PC-9 (cell line): ENCODE measurements at regions of chr3 and their contacts with region 1.

Region 1: DNA sequence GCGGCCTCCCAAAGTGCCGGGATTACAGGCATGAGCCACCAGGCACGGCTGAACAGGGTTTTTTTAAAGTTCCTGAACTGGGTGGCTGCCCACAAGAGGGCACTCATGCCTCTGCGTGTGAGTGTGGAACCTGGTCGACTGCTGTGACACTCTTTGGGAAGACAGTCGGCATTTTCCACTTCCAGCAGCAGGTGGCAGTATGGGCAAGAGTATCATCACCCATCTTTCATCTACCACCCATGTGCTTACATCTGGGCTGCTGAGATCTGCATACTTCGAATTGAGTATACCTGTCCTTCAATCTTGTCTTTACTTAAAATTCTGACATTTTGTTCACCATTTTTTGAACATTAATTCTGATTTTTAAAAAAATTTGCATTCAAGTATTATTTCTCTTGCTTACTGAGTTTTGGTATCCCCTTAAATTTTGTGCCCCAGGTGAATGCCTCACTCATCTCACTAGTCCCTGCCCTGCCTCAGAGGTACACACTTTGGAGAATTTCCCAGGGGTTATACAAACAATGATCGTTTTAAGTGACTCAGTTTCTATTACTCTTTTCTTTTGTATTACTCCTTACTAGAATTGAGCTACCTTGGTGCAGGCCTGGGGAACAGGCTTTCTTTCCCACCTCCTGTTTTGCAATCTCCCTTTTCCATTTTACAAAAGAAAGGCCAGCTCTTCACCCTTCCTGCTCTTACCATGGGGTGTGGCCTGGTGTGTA is 11.8 kb downstream of the CLEC3B start:
- DNase-seq: peak; percentile 83 to 91
- H3K4me3 ChIP-seq: no peak overlapping the region
- H3K27ac ChIP-seq: no peak overlapping the region
- H3K4me1 ChIP-seq: peaks cover 30% of the 10 kb centered on the region
- H3K27me3 ChIP-seq: no peaks in the 10 kb centered on the region
- CTCF ChIP-seq: peak; percentile 88

Region 2: DNA sequence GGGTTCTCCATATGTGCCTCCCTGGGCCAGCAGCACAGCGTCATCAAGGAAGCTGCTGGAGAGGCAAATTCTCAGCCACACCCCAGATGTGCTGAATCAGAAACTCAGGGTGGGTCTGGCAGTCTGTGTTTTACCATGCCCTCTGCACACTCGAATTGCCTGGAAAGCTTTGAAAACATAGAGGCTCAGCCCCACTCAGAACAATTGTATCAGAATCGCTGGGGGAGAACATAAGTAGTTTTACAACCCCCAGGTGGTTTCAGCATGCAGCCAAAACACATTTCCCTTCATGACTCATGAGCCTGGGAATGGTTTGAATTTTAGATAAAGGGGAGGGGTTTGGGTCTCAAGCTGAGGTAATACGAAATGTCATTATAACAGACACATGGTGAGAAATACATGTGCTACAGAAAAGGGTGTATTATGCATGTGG is 153.9 kb before region 1 on chr3:
- CTCF ChIA-PET with region 1: no interaction called
- POLR2A ChIA-PET with region 1: no interaction called
- intact Hi-C with region 1: no loop called
- DNase-seq: peak; percentile 68 to 91
- H3K4me3 ChIP-seq: no peak overlapping the region
- H3K27ac ChIP-seq: peak overlapping the region; percentile 77
- H3K4me1 ChIP-seq: peaks cover 43% of the 10 kb centered on the region
- H3K27me3 ChIP-seq: no peaks in the 10 kb centered on the region
- CTCF ChIP-seq: no peak

Region 3: GRCh38 chr3:44954962-44955361 is 82.9 kb before region 1 on chr3:
- CTCF ChIA-PET with region 1: no interaction called
- POLR2A ChIA-PET with region 1: no interaction called
- intact Hi-C with region 1: no loop called
- DNase-seq: peak; percentile 61 to 89
- H3K4me3 ChIP-seq: no peak overlapping the region
- H3K27ac ChIP-seq: peak overlapping the region; percentile 46
- H3K4me1 ChIP-seq: peaks cover 41% of the 10 kb centered on the region
- H3K27me3 ChIP-seq: no peaks in the 10 kb centered on the region
- CTCF ChIP-seq: no peak

Region 4: DNA sequence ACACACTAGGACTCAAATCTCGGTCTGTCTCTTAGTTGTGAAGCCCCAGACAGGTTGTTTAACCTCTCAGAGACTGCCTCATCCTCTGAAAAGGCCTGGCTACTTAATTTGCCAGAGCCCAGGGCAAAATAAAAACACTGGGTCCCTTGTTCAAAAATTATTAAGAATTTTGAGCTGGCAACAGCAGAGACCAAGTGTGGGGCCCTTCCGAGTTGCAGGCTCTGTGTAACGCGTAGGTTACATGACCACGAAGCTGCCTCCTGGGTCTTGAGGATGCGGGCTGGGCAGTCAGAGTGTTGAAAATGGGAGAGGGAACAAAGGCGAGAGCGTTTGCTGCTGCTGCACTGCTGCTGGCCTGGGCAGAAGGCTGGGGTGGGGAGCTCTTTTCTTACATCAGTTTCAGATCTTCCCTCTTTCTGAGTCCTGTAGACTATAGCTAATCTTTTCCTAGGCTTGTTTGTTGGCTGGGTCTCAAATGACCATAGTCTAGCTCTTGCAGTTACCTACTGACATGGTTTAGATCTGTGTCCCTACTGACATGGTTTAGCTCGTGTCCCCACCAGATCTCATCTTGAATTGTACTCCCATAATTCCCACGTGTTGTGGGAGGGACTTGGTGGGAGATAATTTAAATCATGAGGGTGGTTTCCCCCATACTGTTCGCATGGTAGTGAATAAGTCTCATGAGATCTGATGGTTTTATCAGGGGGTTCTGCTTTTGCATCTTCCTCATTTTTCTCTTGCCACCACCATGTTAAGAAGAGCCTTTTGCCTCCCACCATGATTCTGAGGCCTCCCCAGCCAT is 38.1 kb after region 1 on chr3:
- CTCF ChIA-PET with region 1: interaction called, 10 read pairs
- POLR2A ChIA-PET with region 1: no interaction called
- intact Hi-C with region 1: no loop called
- DNase-seq: no peak
- H3K4me3 ChIP-seq: no peak overlapping the region
- H3K27ac ChIP-seq: no peak overlapping the region
- H3K4me1 ChIP-seq: no peaks in the 10 kb centered on the region
- H3K27me3 ChIP-seq: no peaks in the 10 kb centered on the region
- CTCF ChIP-seq: no peak

Region 5: DNA sequence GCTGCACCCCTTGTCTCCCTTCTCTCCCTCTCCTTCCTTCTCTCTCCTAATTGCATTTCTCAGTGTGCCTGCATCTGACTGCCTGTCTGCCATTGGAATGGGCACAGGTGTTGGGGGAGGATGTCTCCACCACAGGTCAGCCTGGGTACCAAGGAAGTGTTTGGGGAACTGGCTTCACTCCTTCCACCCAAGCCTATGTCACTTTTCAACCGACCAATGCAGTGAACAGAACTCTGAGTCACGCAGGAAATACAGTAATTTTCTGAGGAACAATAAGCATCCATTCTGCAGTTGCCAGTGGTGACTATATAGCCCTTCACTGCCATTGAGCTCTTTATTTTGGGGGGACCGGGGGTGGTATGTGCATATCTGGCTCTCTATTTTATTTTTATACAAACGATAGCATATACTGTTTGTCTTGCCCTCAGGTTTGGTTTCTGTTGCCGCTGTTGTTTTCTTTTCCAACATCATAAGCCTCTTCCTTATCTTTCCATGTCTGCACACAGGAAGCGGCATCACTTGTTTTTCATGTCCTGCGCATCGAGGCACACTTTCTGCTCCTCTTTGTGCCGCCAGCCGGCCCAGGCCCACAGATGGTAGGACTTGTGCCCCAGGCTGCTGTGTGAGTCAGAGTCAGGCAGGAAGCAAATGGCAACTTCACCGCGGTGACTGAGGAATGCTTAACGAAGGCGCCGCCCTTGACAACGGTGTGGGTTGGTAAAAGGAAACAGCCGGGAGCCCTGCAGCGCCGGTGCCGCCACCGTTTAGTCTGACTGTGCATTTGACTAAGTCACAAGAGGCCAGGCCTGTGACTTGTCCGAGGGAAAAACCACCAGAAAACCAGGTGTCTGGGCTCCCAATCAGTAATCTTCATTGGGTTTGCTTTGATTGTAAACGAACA is 129.4 kb after region 1 on chr3:
- CTCF ChIA-PET with region 1: no interaction called
- POLR2A ChIA-PET with region 1: no interaction called
- intact Hi-C with region 1: loop called (anchors 1 kb)
- DNase-seq: peak; percentile 96 to 97
- H3K4me3 ChIP-seq: peak overlapping the region; percentile 26; the same call in 1 of the 2 replicates
- H3K27ac ChIP-seq: peak overlapping the region; percentile 92
- H3K4me1 ChIP-seq: peaks cover 35% of the 10 kb centered on the region
- H3K27me3 ChIP-seq: no peaks in the 10 kb centered on the region
- CTCF ChIP-seq: no peak

Region 6: GRCh38 chr3:45387636-45388348 is 349.9 kb after region 1 on chr3:
- CTCF ChIA-PET with region 1: no interaction called
- POLR2A ChIA-PET with region 1: no interaction called
- intact Hi-C with region 1: loop called (anchors 1 kb)
- DNase-seq: peak in 1 of 2 experiments; percentile 50
- H3K4me3 ChIP-seq: peak overlapping the region; percentile 87; the same call in 1 of the 2 replicates
- H3K27ac ChIP-seq: 0 out of 2 replicates have a peak overlapping the region, but pooled peaks have one; percentile 38
- H3K4me1 ChIP-seq: peaks cover 13% of the 10 kb centered on the region; the same call in 1 of the 2 replicates
- H3K27me3 ChIP-seq: no peaks in the 10 kb centered on the region
- CTCF ChIP-seq: no peak

Region 7: GRCh38 chr3:45656575-45657363 is 618.9 kb after region 1 on chr3:
- CTCF ChIA-PET with region 1: interaction called, 8 read pairs
- POLR2A ChIA-PET with region 1: interaction called, 4 read pairs
- intact Hi-C with region 1: loop called (anchors 1 kb)
- DNase-seq: peak; percentile 84 to 85
- H3K4me3 ChIP-seq: no peak overlapping the region
- H3K27ac ChIP-seq: peak overlapping the region; percentile 43; the same call in 1 of the 2 replicates
- H3K4me1 ChIP-seq: peaks cover 10% of the 10 kb centered on the region
- H3K27me3 ChIP-seq: no peaks in the 10 kb centered on the region
- CTCF ChIP-seq: peak; percentile 89

Region 8: GRCh38 chr3:46078712-46079400 is 1041.0 kb after region 1 on chr3:
- CTCF ChIA-PET with region 1: no interaction called
- POLR2A ChIA-PET with region 1: no interaction called
- intact Hi-C with region 1: loop called (anchors 10 kb)
- DNase-seq: peak; percentile 83 to 84
- H3K4me3 ChIP-seq: no peak overlapping the region
- H3K27ac ChIP-seq: no peak overlapping the region; the same call in 1 of the 2 replicates
- H3K4me1 ChIP-seq: peaks cover 49% of the 10 kb centered on the region
- H3K27me3 ChIP-seq: no peaks in the 10 kb centered on the region
- CTCF ChIP-seq: peak; percentile 94